ENCODE measurements at regions of chr9 and their contacts with region 1.

Region 1: GRCh38 chr9:626596-626995 is 214.9 kb upstream of the DMRT1 start:
- DNase-seq: no peak
- H3K4me3 ChIP-seq: no peak overlapping the region
- H3K27ac ChIP-seq: peak overlapping the region in 1 of 2 donors; percentile 22
- H3K4me1 ChIP-seq: peaks cover 11% of the 10 kb centered on the region
- H3K27me3 ChIP-seq: no peaks in the 10 kb centered on the region
- CTCF ChIP-seq: no peak
- EP300 ChIP-seq: no peak
- POLR2A ChIP-seq: no peak

Region 2: DNA sequence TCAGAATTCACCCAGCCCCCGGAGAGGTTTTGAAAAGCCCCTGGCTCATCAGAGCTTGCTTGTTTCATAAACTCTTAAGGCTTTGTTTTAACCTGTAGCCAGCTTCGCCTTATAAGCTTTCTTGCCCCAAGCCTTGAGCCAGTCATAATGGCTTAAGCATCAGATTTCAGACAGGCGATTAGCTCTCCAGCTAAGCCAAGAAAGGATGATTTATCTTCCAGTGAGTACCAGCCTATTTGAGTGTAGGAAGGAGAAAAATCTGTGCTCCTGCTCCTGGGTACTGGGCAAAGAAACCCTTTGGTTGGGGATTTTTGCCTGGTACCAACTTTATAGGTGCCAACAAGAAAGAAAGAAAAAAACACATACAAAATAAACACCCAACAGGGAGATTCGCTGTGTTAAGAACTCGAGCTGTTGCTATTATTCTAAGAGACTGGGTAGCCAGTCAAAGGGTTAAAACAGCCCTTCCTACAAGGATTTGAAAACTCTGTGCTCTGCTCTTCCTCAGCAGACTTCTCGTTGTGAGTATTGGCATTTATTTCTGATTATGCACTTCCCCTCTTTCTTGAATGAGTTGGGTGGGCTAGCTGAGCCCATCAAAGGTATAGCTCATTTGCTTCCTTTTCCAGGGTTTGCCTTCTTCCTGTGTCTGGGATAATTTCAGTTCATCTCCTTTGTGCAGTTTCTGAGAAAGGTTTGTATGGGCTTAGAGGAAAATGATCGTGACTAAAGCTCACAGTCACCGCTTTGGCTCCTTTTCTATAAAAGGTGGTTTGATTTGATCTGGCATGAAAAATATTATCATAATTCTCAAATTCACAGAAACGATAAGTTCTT is 57.7 kb after region 1 on chr9:
- intact Hi-C with region 1: loop called in 1 of 4 experiments (anchors 10 kb)
- DNase-seq: no peak
- H3K4me3 ChIP-seq: no peak overlapping the region
- H3K27ac ChIP-seq: peak overlapping the region; percentile 5 to 19
- H3K4me1 ChIP-seq: peaks cover 10% of the 10 kb centered on the region
- H3K27me3 ChIP-seq: no peaks in the 10 kb centered on the region
- CTCF ChIP-seq: no peak
- EP300 ChIP-seq: no peak
- POLR2A ChIP-seq: no peak

Region 3: GRCh38 chr9:757246-757881 is 130.8 kb after region 1 on chr9:
- intact Hi-C with region 1: loop called in 1 of 4 experiments (anchors 5 kb)
- DNase-seq: peak in 2 of 5 donors; percentile 27 to 49
- H3K4me3 ChIP-seq: no peak overlapping the region
- H3K27ac ChIP-seq: no peak overlapping the region
- H3K4me1 ChIP-seq: no peaks in the 10 kb centered on the region
- H3K27me3 ChIP-seq: no peaks in the 10 kb centered on the region
- CTCF ChIP-seq: peak in 2 of 3 donors; percentile 13 to 37
- EP300 ChIP-seq: no peak
- POLR2A ChIP-seq: no peak

Measured in ovary (tissue), 10 donors.